CD4-positive, alpha-beta T cell (primary cell): ENCODE measurements at regions of chr13 and their contacts with region 1.

Region 1: GRCh38 chr13:39942552-39943273 is 287.3 kb downstream of the COG6 start:
- DNase-seq: peak; percentile 52 to 85 (median 62)
- ATAC-seq: peak; percentile 100
- H3K4me3 ChIP-seq: no peak overlapping the region
- H3K4me3 Mint-ChIP-seq: no peak overlapping the region
- H3K27ac ChIP-seq: no peak overlapping the region
- H3K27ac Mint-ChIP-seq: no peak overlapping the region
- H3K4me1 ChIP-seq: peaks cover 8% of the 10 kb centered on the region
- H3K4me1 Mint-ChIP-seq: peaks cover 10% of the 10 kb centered on the region
- H3K27me3 ChIP-seq: no peaks in the 10 kb centered on the region
- H3K27me3 Mint-ChIP-seq: no peaks in the 10 kb centered on the region
- CTCF ChIP-seq: peak; percentile 100

Region 2: DNA sequence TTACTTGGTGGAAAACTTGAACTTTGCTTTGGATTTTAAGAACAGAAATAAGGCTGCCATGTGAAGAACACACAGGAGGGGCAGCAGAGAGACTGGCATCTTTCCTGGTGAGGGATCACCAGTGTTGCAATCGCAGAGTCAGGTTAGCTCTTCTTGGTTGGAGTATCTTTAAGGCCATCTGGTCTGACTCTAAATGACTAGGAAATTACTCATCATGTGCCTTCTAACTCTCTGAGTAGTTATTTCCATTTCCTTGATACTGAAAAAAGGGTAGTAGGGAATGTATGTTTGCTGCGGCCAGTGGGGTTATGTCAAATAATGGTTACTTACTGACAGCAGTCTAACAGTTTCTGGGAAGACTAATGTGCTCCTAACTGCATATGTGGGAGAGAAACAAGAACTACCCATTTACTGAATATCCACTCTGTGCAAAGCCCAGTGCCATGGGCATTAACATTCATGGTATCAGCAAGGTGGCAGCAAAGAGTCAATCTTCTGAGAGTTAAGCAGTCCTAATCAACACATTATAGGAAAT is 165.1 kb before region 1 on chr13:
- CTCF ChIA-PET with region 1: no interaction called
- POLR2A ChIA-PET with region 1: no interaction called
- intact Hi-C with region 1: loop called (anchors 1 to 5 kb)
- DNase-seq: peak in 6 of 14 experiments; percentile 6 to 56 (median 41)
- ATAC-seq: peak; percentile 60
- H3K4me3 ChIP-seq: no peak overlapping the region
- H3K4me3 Mint-ChIP-seq: no peak overlapping the region
- H3K27ac ChIP-seq: no peak overlapping the region
- H3K27ac Mint-ChIP-seq: peak overlapping the region; percentile 58
- H3K4me1 ChIP-seq: peaks cover 18% of the 10 kb centered on the region
- H3K4me1 Mint-ChIP-seq: peaks cover 37% of the 10 kb centered on the region
- H3K27me3 ChIP-seq: no peaks in the 10 kb centered on the region
- H3K27me3 Mint-ChIP-seq: no peaks in the 10 kb centered on the region
- CTCF ChIP-seq: peak; percentile 63

Region 3: GRCh38 chr13:40069173-40070044 is 126.7 kb after region 1 on chr13:
- CTCF ChIA-PET with region 1: interaction called, 5 read pairs
- POLR2A ChIA-PET with region 1: no interaction called
- intact Hi-C with region 1: loop called in 1 of 2 experiments (anchors 5 kb)
- DNase-seq: peak; percentile 54 to 86 (median 67)
- ATAC-seq: peak; percentile 92
- H3K4me3 ChIP-seq: no peak overlapping the region
- H3K4me3 Mint-ChIP-seq: peak overlapping the region; percentile 46
- H3K27ac ChIP-seq: no peak overlapping the region
- H3K27ac Mint-ChIP-seq: peak overlapping the region; percentile 8
- H3K4me1 ChIP-seq: peaks cover 15% of the 10 kb centered on the region
- H3K4me1 Mint-ChIP-seq: peaks cover 38% of the 10 kb centered on the region
- H3K27me3 ChIP-seq: no peaks in the 10 kb centered on the region
- H3K27me3 Mint-ChIP-seq: no peaks in the 10 kb centered on the region
- CTCF ChIP-seq: peak; percentile 91